Heart left ventricle (tissue), 16 donors: ENCODE measurements at regions of chr6 and their contacts with region 1.

Region 1: DNA sequence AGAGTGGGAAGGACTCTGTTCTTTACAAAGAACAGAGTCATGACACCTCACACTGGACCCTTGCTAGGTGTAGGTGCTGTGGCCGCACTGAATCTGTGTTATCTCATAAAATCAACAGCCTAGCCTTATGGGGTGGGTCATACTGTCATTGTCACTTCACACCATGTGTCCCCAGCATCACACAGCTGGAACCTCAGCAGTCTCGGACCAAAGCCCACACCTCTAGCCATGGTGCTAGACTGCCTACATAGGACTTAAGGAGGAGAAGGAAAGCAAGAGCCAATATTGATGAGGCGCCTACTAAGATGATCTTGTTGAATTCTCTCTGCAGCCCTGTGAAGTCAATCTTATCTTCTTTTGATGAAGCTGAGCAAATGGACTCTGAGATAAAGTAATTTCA is 31.0 kb downstream of the UNC5CL start:
- DNase-seq: no peak
- ATAC-seq: no peak
- H3K4me3 ChIP-seq: no peak overlapping the region
- H3K27ac ChIP-seq: no peak overlapping the region
- H3K4me1 ChIP-seq: no peaks in the 10 kb centered on the region
- H3K27me3 ChIP-seq: peaks cover 0 to 5% (median 0%) of the 10 kb centered on the region in 9 donors
- CTCF ChIP-seq: no peak
- POLR2A ChIP-seq: no peak

Region 2: DNA sequence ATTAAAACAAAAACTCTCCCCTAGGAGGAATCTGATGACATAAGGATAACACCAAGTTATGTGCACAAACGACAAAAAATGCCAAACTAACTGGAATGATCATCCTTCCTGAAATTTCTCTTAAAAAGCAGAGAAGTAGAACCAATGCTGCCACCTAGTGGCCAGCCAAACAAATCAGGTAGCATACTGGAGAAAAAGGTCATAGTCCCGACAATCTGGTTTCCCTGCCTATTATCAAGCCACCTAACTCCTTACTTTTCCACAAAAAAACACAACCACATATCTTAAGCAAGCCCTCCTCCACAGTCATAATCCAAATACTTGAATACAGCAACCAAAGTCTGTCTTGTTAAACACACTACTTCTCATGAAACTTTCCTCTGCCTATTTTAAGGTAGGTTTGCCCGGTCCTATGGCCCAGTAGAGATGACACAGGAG is 58.9 kb after region 1 on chr6:
- intact Hi-C with region 1: loop called in 8 of 10 experiments (anchors 2 to 10 kb)
- DNase-seq: peak in 4 of 5 donors; percentile 61 to 76 (median 73)
- ATAC-seq: no peak
- H3K4me3 ChIP-seq: no peak overlapping the region
- H3K27ac ChIP-seq: peak overlapping the region in 2 of 12 donors; percentile 3 to 7
- H3K4me1 ChIP-seq: peaks cover 0 to 38% (median 11%) of the 10 kb centered on the region in 12 donors
- H3K27me3 ChIP-seq: no peaks in the 10 kb centered on the region
- CTCF ChIP-seq: peak; percentile 74 to 90 (median 86)
- POLR2A ChIP-seq: no peak

Region 3: GRCh38 chr6:41092421-41093140 is 84.6 kb after region 1 on chr6:
- intact Hi-C with region 1: no loop called
- DNase-seq: no peak
- ATAC-seq: no peak
- H3K4me3 ChIP-seq: no peak overlapping the region
- H3K27ac ChIP-seq: no peak overlapping the region
- H3K4me1 ChIP-seq: peaks cover 0 to 8% (median 0%) of the 10 kb centered on the region in 12 donors
- H3K27me3 ChIP-seq: no peaks in the 10 kb centered on the region
- CTCF ChIP-seq: peak in 7 of 12 donors; percentile 16 to 41 (median 33)
- POLR2A ChIP-seq: no peak